ENCODE measurements at regions of chr5 and their contacts with region 1.

Region 1: DNA sequence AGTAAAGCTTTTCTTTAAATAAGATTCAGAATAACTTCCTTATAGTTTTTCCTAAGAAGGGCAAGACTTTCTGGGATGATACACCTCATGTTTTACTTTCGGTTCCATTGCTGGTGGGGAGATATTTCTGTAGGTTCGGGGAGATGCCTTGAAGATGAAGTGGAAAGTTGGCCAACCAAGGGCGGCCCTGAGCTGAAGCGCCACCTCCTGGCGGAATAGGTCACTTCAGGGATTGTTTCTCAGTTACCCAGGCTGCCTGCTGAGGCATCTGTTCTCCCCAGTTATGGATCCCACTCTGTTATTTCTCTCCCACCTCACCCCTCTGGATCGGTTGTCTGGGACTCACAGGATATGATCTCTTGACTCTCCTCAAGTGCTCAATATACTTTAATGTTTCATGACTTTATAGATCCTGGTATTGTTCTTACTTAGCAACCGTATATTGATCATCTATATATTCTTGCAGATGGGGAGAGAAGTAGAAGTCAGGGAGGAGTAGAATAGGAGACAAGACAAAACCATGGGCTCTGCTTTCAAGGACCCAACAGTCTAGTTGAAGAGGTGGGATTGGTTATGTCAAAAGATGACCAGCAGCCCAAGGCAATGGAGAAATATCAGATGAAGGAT is 23.4 kb downstream of the MEGF10 start:
- DNase-seq: peak; percentile 54 to 84 (median 71)
- ATAC-seq: peak in 1 of 2 donors; percentile 72
- H3K4me3 ChIP-seq: no peak overlapping the region
- H3K27ac ChIP-seq: no peak overlapping the region
- H3K4me1 ChIP-seq: no peaks in the 10 kb centered on the region
- H3K27me3 ChIP-seq: no peaks in the 10 kb centered on the region

Region 2: GRCh38 chr5:126837906-126838539 is 475.9 kb before region 1 on chr5:
- intact Hi-C with region 1: loop called in 1 of 4 experiments (anchors 10 kb)
- DNase-seq: no peak
- ATAC-seq: peak; percentile 50 to 71
- H3K4me3 ChIP-seq: no peak overlapping the region
- H3K27ac ChIP-seq: no peak overlapping the region
- H3K4me1 ChIP-seq: no peaks in the 10 kb centered on the region
- H3K27me3 ChIP-seq: no peaks in the 10 kb centered on the region

Measured in right cardiac atrium (tissue), 5 donors.